MCF 10A (cell line): ENCODE measurements at regions of chr13 and their contacts with region 1.

Region 1: DNA sequence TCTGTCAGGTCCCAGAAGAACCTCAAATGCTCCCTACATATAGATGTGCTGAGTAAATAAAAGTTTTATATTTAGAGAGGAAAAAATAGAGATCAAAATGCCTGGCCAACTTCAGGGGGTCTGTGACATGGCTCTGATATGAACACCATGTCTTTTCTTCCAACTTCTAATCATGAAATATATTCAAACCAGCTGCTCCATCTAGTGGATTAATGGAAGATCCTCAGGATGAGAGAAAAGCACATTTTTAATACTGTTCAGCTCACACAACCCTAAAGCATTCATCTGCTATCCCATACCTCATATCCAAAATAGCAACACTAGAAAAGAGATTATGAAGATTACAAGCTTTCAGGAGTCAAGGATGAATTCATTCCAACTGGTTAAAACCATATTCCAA is 56.0 kb upstream of the DOCK9 start:
- DNase-seq: peak; percentile 49
- H3K4me3 Mint-ChIP-seq: no peak overlapping the region
- H3K27ac Mint-ChIP-seq: no peak overlapping the region
- H3K4me1 Mint-ChIP-seq: peaks cover 22% of the 10 kb centered on the region
- H3K27me3 Mint-ChIP-seq: no peaks in the 10 kb centered on the region
- CTCF ChIP-seq: peak; percentile 70

Region 2: GRCh38 chr13:98842864-98843481 is 190.8 kb before region 1 on chr13:
- CTCF ChIA-PET with region 1: interaction called, 15 read pairs
- POLR2A ChIA-PET with region 1: no interaction called
- intact Hi-C with region 1: loop called (anchors 1 kb)
- DNase-seq: peak; percentile 67
- H3K4me3 Mint-ChIP-seq: no peak overlapping the region
- H3K27ac Mint-ChIP-seq: no peak overlapping the region
- H3K4me1 Mint-ChIP-seq: no peaks in the 10 kb centered on the region
- H3K27me3 Mint-ChIP-seq: no peaks in the 10 kb centered on the region
- CTCF ChIP-seq: peak; percentile 83

Region 3: GRCh38 chr13:98869408-98870090 is 164.3 kb before region 1 on chr13:
- CTCF ChIA-PET with region 1: interaction called, 10 read pairs
- POLR2A ChIA-PET with region 1: no interaction called
- intact Hi-C with region 1: no loop called
- DNase-seq: peak; percentile 8
- H3K4me3 Mint-ChIP-seq: no peak overlapping the region
- H3K27ac Mint-ChIP-seq: no peak overlapping the region
- H3K4me1 Mint-ChIP-seq: no peaks in the 10 kb centered on the region
- H3K27me3 Mint-ChIP-seq: no peaks in the 10 kb centered on the region
- CTCF ChIP-seq: peak; percentile 30

Region 4: GRCh38 chr13:98972627-98973026 is 61.2 kb before region 1 on chr13:
- CTCF ChIA-PET with region 1: interaction called, 8 read pairs
- POLR2A ChIA-PET with region 1: no interaction called
- intact Hi-C with region 1: loop called (anchors 2 kb)
- DNase-seq: no peak
- H3K4me3 Mint-ChIP-seq: peak overlapping the region; percentile 16
- H3K27ac Mint-ChIP-seq: peak overlapping the region; percentile 75
- H3K4me1 Mint-ChIP-seq: peaks cover 37% of the 10 kb centered on the region
- H3K27me3 Mint-ChIP-seq: no peaks in the 10 kb centered on the region
- CTCF ChIP-seq: no peak

Region 5: GRCh38 chr13:99051768-99052455 is 18.1 kb after region 1 on chr13:
- CTCF ChIA-PET with region 1: interaction called, 30 read pairs
- POLR2A ChIA-PET with region 1: interaction called, 4 read pairs
- intact Hi-C with region 1: no loop called
- DNase-seq: no peak
- H3K4me3 Mint-ChIP-seq: no peak overlapping the region
- H3K27ac Mint-ChIP-seq: no peak overlapping the region
- H3K4me1 Mint-ChIP-seq: peaks cover 39% of the 10 kb centered on the region
- H3K27me3 Mint-ChIP-seq: no peaks in the 10 kb centered on the region
- CTCF ChIP-seq: no peak